WTC11 (cell line): ENCODE measurements at regions of chrX and their contacts with region 1.

Region 1: DNA sequence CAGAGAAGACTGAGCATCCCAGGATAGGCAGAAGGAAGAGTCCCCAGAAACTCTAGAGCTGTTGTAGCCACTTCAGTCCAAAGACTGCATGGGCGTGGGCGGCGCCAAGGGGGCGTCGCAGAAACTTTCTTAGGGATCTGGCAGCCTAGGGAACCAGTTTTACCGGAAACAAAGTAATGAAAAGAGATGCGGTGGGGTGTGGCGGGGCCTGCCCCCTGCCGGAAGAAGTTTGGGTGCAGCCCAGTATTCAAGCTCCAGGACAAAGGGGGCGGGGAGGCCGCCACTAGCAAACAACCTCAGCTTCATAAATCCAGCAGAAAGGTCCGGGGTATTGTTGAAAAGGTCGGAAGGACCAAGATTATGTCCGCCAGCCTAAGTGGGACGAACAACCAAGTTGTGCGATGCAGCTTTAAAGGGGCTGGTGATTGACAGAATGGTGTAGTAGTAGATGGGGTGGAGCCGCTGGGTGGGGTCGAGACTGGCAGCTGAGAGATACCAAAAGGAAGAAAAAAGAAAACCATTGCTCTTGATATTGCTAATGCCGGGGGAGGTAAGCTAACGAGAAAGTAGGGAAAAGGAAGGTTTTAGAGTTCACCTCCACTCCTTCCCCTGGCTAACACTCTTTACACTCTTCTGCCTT is 190.5 kb downstream of the RRAGB start:
- DNase-seq: peak; percentile 73
- ATAC-seq: peak; percentile 82
- H3K4me3 Mint-ChIP-seq: peak overlapping the region; percentile 87
- H3K27ac Mint-ChIP-seq: peak overlapping the region; percentile 91
- H3K4me1 Mint-ChIP-seq: peaks cover 34% of the 10 kb centered on the region
- H3K27me3 Mint-ChIP-seq: no peaks in the 10 kb centered on the region
- CTCF ChIP-seq: peak; percentile 28

Region 2: DNA sequence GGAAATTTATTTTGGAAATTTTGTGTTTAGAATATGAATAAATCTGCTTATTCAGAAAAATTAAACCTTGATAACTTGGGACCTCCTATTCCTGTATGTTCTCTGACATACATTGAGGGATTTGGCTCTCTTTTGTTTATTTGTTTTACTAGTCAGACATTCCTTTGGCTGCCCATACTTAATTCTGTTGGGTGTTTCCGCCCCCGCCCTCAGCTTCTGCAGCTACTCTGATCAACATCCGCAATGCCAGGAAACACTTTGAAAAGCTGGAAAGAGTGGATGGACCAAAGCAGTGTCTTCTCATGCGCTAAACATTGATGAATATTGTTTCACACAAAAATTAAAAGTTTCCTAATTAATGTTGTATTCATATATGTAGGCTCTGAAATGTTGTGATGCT is 150.1 kb before region 1 on chrX:
- CTCF ChIA-PET with region 1: no interaction called
- POLR2A ChIA-PET with region 1: no interaction called
- DNase-seq: no peak
- ATAC-seq: no peak
- H3K4me3 Mint-ChIP-seq: no peak overlapping the region
- H3K27ac Mint-ChIP-seq: no peak overlapping the region
- H3K4me1 Mint-ChIP-seq: no peaks in the 10 kb centered on the region
- H3K27me3 Mint-ChIP-seq: no peaks in the 10 kb centered on the region
- CTCF ChIP-seq: no peak

Region 3: GRCh38 chrX:55801805-55802204 is 106.3 kb before region 1 on chrX:
- CTCF ChIA-PET with region 1: interaction called, 15 read pairs
- POLR2A ChIA-PET with region 1: no interaction called
- DNase-seq: no peak
- ATAC-seq: no peak
- H3K4me3 Mint-ChIP-seq: no peak overlapping the region
- H3K27ac Mint-ChIP-seq: no peak overlapping the region
- H3K4me1 Mint-ChIP-seq: no peaks in the 10 kb centered on the region
- H3K27me3 Mint-ChIP-seq: no peaks in the 10 kb centered on the region
- CTCF ChIP-seq: no peak

Region 4: GRCh38 chrX:55839485-55839884 is 68.6 kb before region 1 on chrX:
- CTCF ChIA-PET with region 1: interaction called, 21 read pairs
- POLR2A ChIA-PET with region 1: no interaction called
- DNase-seq: peak; percentile 64
- ATAC-seq: peak; percentile 99
- H3K4me3 Mint-ChIP-seq: no peak overlapping the region
- H3K27ac Mint-ChIP-seq: no peak overlapping the region
- H3K4me1 Mint-ChIP-seq: peaks cover 5% of the 10 kb centered on the region
- H3K27me3 Mint-ChIP-seq: peaks cover 2% of the 10 kb centered on the region; the same call in 1 of the 2 replicates
- CTCF ChIP-seq: no peak

Region 5: GRCh38 chrX:55919367-55920221 is 11.5 kb after region 1 on chrX:
- CTCF ChIA-PET with region 1: interaction called, 14 read pairs
- POLR2A ChIA-PET with region 1: no interaction called
- DNase-seq: no peak
- ATAC-seq: peak; percentile 69
- H3K4me3 Mint-ChIP-seq: no peak overlapping the region
- H3K27ac Mint-ChIP-seq: no peak overlapping the region
- H3K4me1 Mint-ChIP-seq: peaks cover 4% of the 10 kb centered on the region; the same call in 1 of the 2 replicates
- H3K27me3 Mint-ChIP-seq: no peaks in the 10 kb centered on the region
- CTCF ChIP-seq: no peak

Region 6: DNA sequence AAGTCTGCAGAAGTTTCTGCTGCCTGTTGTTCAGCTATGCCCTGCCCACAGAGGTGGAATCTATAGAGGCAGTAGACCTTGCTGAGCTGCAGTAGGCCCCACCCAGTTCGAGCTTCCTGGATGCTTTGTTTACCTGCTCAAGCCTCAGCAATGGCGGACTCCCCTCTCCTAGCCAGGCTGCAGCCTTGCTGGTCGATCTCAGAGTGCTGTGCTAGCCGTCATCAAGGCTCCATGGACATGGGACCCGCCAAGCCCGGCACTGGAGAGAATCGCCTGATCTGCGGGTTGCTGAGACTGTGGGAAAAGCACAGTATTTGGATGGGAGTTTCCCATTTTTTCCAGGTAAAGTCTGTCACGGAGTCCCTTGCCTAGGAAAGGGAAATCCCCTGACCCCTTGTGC is 199.2 kb after region 1 on chrX:
- CTCF ChIA-PET with region 1: no interaction called
- POLR2A ChIA-PET with region 1: no interaction called
- DNase-seq: no peak
- ATAC-seq: no peak
- H3K4me3 Mint-ChIP-seq: no peak overlapping the region
- H3K27ac Mint-ChIP-seq: no peak overlapping the region
- H3K4me1 Mint-ChIP-seq: no peaks in the 10 kb centered on the region
- H3K27me3 Mint-ChIP-seq: no peaks in the 10 kb centered on the region
- CTCF ChIP-seq: no peak

Region 7: GRCh38 chrX:56232221-56233082 is 324.4 kb after region 1 on chrX and contains the start of gene KLF8:
- CTCF ChIA-PET with region 1: interaction called, 25 read pairs
- POLR2A ChIA-PET with region 1: interaction called, 11 read pairs
- DNase-seq: peak; percentile 50
- ATAC-seq: peak; percentile 62
- H3K4me3 Mint-ChIP-seq: peak within 1 kb of the TSS; percentile 83
- H3K27ac Mint-ChIP-seq: peak within 1 kb of the TSS; percentile 88
- H3K4me1 Mint-ChIP-seq: peaks cover 17% of the 10 kb centered on the region
- H3K27me3 Mint-ChIP-seq: no peaks in the 10 kb centered on the region
- CTCF ChIP-seq: no peak
- total RNA-seq, gene KLF8: 10.2 to 11.4 TPM (median 11.1 TPM) in 3 replicates